ENCODE measurements at regions of chr11 and their contacts with region 1.

Region 1: DNA sequence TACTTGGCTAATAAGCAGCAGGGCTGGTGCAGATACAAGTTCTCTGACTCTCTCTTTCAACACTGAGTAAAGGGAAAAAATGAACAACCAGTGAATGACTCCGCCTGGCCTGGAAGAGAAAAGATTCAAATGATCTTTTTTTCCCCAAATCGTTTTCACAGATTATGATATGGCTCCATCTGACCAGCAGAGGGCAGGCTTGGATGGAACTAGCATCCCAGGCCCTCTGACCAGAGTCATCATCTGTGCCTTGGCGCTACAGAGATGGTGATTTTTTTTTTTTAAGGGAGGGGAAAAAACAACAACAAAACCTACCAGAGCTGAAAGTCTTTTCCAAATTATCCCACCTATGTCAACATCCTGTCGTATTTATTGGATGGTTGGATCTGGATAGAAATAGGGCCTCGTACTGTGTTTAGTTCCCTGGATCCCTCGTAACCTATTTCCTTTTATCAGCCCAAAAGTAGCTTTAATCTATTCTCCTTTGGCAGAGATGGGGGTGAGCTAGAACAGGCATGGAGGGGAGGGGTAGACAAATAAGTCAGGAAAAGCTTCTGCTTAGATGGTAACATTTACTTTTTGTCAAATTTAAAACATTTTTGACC is 69.7 kb downstream of the PRSS23 start:
- DNase-seq: no peak
- ATAC-seq: peak; percentile 83

Region 2: GRCh38 chr11:86848861-86849260 is 21.2 kb before region 1 on chr11:
- intact Hi-C with region 1: no loop called
- DNase-seq: no peak
- ATAC-seq: no peak

Region 3: DNA sequence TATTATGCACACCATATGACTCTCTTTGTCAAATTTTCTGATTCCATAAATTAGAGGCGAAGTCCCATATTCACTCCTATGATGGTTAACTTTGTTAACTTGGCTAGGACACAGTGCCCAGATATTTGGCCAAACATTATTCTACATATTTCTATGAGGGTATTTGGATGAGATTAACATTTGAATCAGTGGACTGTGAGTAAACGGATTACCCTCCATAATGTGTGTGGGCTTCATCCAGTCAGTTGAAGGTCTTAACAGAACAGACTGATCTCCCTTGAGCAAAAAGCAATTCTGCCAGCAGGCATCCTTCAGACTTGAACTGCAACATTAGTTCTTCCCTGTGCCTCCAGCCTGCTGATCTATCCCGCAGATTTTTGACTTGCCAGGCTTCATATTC is 15.2 kb after region 1 on chr11:
- intact Hi-C with region 1: no loop called
- DNase-seq: no peak
- ATAC-seq: no peak

Region 4: DNA sequence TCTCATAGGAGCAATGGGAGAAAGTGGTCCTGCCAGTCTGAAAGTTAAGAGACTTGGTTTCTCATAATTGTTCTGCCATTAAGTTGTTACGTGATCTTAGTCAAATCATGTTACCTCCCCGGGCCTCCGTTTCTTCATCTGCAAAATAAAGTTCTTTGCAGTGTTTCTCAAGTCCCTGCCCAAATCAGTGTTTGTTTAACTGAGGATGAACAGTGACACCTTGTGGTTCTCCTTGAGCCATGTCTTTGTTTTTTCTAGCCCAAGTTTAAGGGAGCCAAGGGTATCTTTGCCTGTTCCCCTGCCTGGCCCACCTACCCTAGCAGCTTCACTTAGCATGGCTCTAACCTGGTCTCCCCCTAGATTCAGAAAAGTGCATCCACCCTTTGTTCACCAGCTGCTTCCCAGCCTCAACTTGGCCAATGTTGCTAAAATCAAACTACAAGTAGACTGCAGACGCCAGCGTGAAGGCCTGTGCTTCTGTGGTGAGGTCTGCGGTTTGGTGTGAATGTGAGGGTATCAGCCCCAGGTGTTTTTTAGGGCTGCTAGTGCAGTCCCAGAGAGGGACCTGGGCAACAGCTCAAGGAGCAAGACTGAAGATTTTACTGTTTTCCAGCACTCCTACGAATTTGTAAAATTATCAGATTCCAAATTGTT is 49.6 kb after region 1 on chr11:
- intact Hi-C with region 1: loop called (anchors 1 kb)
- DNase-seq: no peak
- ATAC-seq: peak; percentile 50

Region 5: GRCh38 chr11:87290304-87290922 is 420.3 kb after region 1 on chr11:
- intact Hi-C with region 1: loop called (anchors 2 kb)
- DNase-seq: no peak
- ATAC-seq: no peak

Region 6: GRCh38 chr11:87421422-87421821 is 551.4 kb after region 1 on chr11:
- intact Hi-C with region 1: loop called (anchors 5 kb)
- DNase-seq: no peak
- ATAC-seq: peak; percentile 81